CD8-positive, alpha-beta memory T cell (primary cell): ENCODE measurements at regions of chr6 and their contacts with region 1.

Region 1: GRCh38 chr6:42440778-42441696 is 10.7 kb downstream of the TRERF1 start:
- DNase-seq: no peak
- H3K4me3 ChIP-seq: no peak overlapping the region
- H3K4me3 Mint-ChIP-seq: peak overlapping the region; percentile 3 to 86 (median 75)
- H3K27ac ChIP-seq: no peak overlapping the region
- H3K27ac Mint-ChIP-seq: peak overlapping the region; percentile 69 to 97 (median 85)
- H3K4me1 ChIP-seq: peaks cover 48% of the 10 kb centered on the region
- H3K4me1 Mint-ChIP-seq: peaks cover 67 to 87% (median 84%) of the 10 kb centered on the region in 3 donors
- H3K27me3 ChIP-seq: no peaks in the 10 kb centered on the region
- H3K27me3 Mint-ChIP-seq: peaks cover 0 to 3% of the 10 kb centered on the region in 2 donors

Region 2: DNA sequence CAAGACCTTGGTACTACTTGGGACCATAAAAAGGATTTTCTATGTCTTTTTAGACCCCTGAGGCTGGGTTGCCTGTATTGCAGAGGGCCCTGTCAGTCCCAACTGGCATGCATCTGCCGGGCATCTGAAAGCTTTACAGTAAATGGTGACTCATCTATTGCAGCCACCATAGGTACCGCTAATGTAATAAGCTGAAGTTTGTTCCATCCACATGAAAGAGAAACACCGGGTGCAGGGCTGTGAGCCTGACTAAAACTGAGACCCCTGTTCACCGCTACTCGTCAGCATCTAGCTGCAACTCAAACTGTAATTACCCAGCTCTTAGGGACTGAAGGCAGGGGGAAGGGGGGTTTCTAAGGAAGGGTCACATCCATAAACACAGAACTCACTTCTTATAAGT is 38.9 kb before region 1 on chr6:
- CTCF ChIA-PET with region 1: interaction called, 11 read pairs
- POLR2A ChIA-PET with region 1: no interaction called
- DNase-seq: peak in 4 of 5 donors; percentile 10 to 75 (median 23)
- H3K4me3 ChIP-seq: no peak overlapping the region
- H3K4me3 Mint-ChIP-seq: peak overlapping the region; percentile 22 to 89 (median 74)
- H3K27ac ChIP-seq: no peak overlapping the region
- H3K27ac Mint-ChIP-seq: peak overlapping the region; percentile 66 to 98 (median 90)
- H3K4me1 ChIP-seq: peaks cover 56% of the 10 kb centered on the region
- H3K4me1 Mint-ChIP-seq: peaks cover 79 to 99% (median 98%) of the 10 kb centered on the region in 3 donors
- H3K27me3 ChIP-seq: no peaks in the 10 kb centered on the region
- H3K27me3 Mint-ChIP-seq: no peaks in the 10 kb centered on the region

Region 3: GRCh38 chr6:42453031-42453653 is 12.1 kb after region 1 on chr6:
- CTCF ChIA-PET with region 1: interaction called, 9 read pairs
- POLR2A ChIA-PET with region 1: interaction called, 10 read pairs
- DNase-seq: peak; percentile 64 to 85 (median 76)
- H3K4me3 ChIP-seq: peak overlapping the region; percentile 92
- H3K4me3 Mint-ChIP-seq: peak overlapping the region; percentile 86 to 100 (median 93)
- H3K27ac ChIP-seq: no peak overlapping the region
- H3K27ac Mint-ChIP-seq: peak overlapping the region in 2 of 8 donors; percentile 12 to 89
- H3K4me1 ChIP-seq: peaks cover 12% of the 10 kb centered on the region
- H3K4me1 Mint-ChIP-seq: peaks cover 31 to 42% (median 33%) of the 10 kb centered on the region in 3 donors
- H3K27me3 ChIP-seq: no peaks in the 10 kb centered on the region
- H3K27me3 Mint-ChIP-seq: no peaks in the 10 kb centered on the region

Region 4: DNA sequence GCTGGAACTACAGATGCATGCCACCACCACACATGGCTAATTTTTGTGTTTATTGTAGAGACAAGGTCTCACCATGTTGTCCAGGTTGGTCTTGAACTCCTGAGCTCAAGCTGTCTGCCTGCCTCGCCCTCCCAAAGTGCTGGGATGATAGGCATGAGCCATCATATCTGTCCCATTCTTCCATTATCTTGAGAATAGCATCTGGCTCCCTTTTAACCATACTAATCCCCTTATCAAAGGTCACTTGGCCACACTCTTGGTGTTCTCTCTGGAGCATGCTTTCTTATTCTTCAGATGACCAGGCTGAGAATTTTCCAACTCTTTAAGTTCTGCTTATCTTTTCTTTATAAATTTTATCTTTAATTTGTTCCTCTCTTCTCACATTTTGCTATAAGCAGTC is 26.6 kb after region 1 on chr6:
- CTCF ChIA-PET with region 1: no interaction called
- POLR2A ChIA-PET with region 1: no interaction called
- DNase-seq: no peak
- H3K4me3 ChIP-seq: no peak overlapping the region
- H3K4me3 Mint-ChIP-seq: no peak overlapping the region
- H3K27ac ChIP-seq: no peak overlapping the region
- H3K27ac Mint-ChIP-seq: no peak overlapping the region
- H3K4me1 ChIP-seq: no peaks in the 10 kb centered on the region
- H3K4me1 Mint-ChIP-seq: no peaks in the 10 kb centered on the region
- H3K27me3 ChIP-seq: no peaks in the 10 kb centered on the region
- H3K27me3 Mint-ChIP-seq: peaks cover 0 to 2% of the 10 kb centered on the region in 2 donors